ENCODE measurements at regions of chr1 and their contacts with region 1.

Region 1: GRCh38 chr1:43864111-43865045 is 69.2 kb upstream of the ARTN start:
- DNase-seq: peak; percentile 12
- H3K4me3 Mint-ChIP-seq: no peak overlapping the region
- H3K27ac Mint-ChIP-seq: peak overlapping the region; percentile 35
- H3K4me1 Mint-ChIP-seq: peaks cover 26% of the 10 kb centered on the region
- H3K27me3 Mint-ChIP-seq: no peaks in the 10 kb centered on the region

Region 2: GRCh38 chr1:43830807-43831206 is 33.6 kb before region 1 on chr1:
- CTCF ChIA-PET with region 1: no interaction called
- POLR2A ChIA-PET with region 1: no interaction called
- intact Hi-C with region 1: loop called (anchors 1 kb)
- DNase-seq: no peak
- H3K4me3 Mint-ChIP-seq: no peak overlapping the region
- H3K27ac Mint-ChIP-seq: no peak overlapping the region
- H3K4me1 Mint-ChIP-seq: peaks cover 36% of the 10 kb centered on the region
- H3K27me3 Mint-ChIP-seq: no peaks in the 10 kb centered on the region

Region 3: GRCh38 chr1:43836267-43836951 is 28.0 kb before region 1 on chr1:
- CTCF ChIA-PET with region 1: no interaction called
- POLR2A ChIA-PET with region 1: no interaction called
- intact Hi-C with region 1: loop called (anchors 1 kb)
- DNase-seq: peak; percentile 79
- H3K4me3 Mint-ChIP-seq: no peak overlapping the region
- H3K27ac Mint-ChIP-seq: no peak overlapping the region
- H3K4me1 Mint-ChIP-seq: peaks cover 33% of the 10 kb centered on the region
- H3K27me3 Mint-ChIP-seq: no peaks in the 10 kb centered on the region